Activated naive CD4-positive, alpha-beta T cell treated with anti-CD3 and anti-CD28 coated beads for 36 hours (primary cell): ENCODE measurements at regions of chr4 and their contacts with region 1.

Region 1: DNA sequence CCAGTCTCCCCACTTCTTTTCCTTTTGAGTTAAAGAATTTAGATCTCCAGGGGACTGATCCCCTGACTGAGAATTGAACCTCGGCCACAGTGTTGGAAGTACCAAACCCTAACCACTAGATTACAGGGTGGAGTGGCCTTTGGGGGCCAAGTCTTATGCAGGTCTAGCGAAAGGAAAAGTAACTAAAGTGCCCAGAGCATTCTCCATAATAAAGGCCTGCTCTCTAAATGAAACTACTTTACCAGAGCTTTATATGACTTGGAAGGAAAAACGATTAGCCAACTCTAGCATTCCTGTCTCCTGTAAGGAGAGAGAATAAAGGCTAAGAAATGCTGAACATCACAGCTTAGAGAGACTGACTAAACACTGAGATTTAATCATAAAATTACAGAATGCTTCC is 788.0 kb downstream of the C4orf33 start:
- DNase-seq: no peak
- H3K4me3 Mint-ChIP-seq: no peak overlapping the region
- H3K27ac Mint-ChIP-seq: no peak overlapping the region
- H3K4me1 Mint-ChIP-seq: no peaks in the 10 kb centered on the region
- H3K27me3 Mint-ChIP-seq: no peaks in the 10 kb centered on the region

Region 2: GRCh38 chr4:129897111-129897510 is 13.1 kb after region 1 on chr4:
- CTCF ChIA-PET with region 1: no interaction called
- intact Hi-C with region 1: loop called (anchors 2 kb)
- DNase-seq: no peak
- H3K4me3 Mint-ChIP-seq: no peak overlapping the region
- H3K27ac Mint-ChIP-seq: no peak overlapping the region
- H3K4me1 Mint-ChIP-seq: no peaks in the 10 kb centered on the region
- H3K27me3 Mint-ChIP-seq: no peaks in the 10 kb centered on the region

Region 3: DNA sequence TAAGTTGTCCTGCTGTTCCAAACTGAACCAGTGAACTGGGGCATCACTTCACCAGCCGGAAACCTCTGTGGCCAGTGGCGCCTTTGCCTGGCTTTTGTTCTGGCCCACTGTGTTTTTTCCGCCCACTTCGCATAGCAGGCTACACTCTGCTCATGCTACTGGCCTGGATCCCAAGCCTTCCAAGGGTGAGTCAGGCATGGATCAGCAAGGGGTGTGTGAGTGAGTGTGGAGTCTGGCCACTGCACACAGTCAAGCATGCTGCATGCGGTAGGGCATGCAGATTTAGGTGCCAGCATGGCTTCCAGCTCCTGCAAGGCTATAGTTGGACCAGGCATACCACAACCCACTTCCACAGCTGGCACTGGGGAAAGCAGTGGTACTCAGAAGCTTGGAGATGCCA is 1179.9 kb after region 1 on chr4:
- CTCF ChIA-PET with region 1: no interaction called
- intact Hi-C with region 1: no loop called
- DNase-seq: no peak
- H3K4me3 Mint-ChIP-seq: no peak overlapping the region
- H3K27ac Mint-ChIP-seq: no peak overlapping the region
- H3K4me1 Mint-ChIP-seq: no peaks in the 10 kb centered on the region
- H3K27me3 Mint-ChIP-seq: no peaks in the 10 kb centered on the region